Heart left ventricle (tissue), 16 donors: ENCODE measurements at regions of chr17 and their contacts with region 1.

Region 1: GRCh38 chr17:44070455-44071197 is at the start of gene G6PC3:
- DNase-seq: peak; percentile 96 to 98 (median 97)
- ATAC-seq: peak; percentile 92 to 96 (median 94)
- H3K4me3 ChIP-seq: peak within 1 kb of the TSS; percentile 32 to 85 (median 74)
- H3K27ac ChIP-seq: peak within 1 kb of the TSS; percentile 18 to 94 (median 90)
- H3K4me1 ChIP-seq: peaks cover 5 to 42% (median 27%) of the 10 kb centered on the region in 12 donors
- H3K27me3 ChIP-seq: no peaks in the 10 kb centered on the region
- CTCF ChIP-seq: peak in 2 of 12 donors; percentile 27 to 38
- POLR2A ChIP-seq: peak in 1 of 2 donors; percentile 67
- total RNA-seq, gene G6PC3: 28.5 to 46.5 (median 36.6) TPM

Region 2: GRCh38 chr17:44014437-44015172 is 56.0 kb before region 1 on chr17 and contains the start of gene TMEM101:
- intact Hi-C with region 1: loop called in 1 of 10 experiments (anchors 2 kb)
- DNase-seq: peak; percentile 91 to 94 (median 93)
- ATAC-seq: peak; percentile 93 to 96 (median 94)
- H3K4me3 ChIP-seq: peak within 1 kb of the TSS; percentile 68 to 97 (median 84)
- H3K27ac ChIP-seq: peak within 1 kb of the TSS in 11 of 12 donors; percentile 63 to 85 (median 79)
- H3K4me1 ChIP-seq: peaks cover 2 to 42% (median 15%) of the 10 kb centered on the region in 12 donors
- H3K27me3 ChIP-seq: no peaks in the 10 kb centered on the region
- CTCF ChIP-seq: peak in 1 of 12 donors; percentile 8
- POLR2A ChIP-seq: peak in 1 of 2 donors; percentile 49
- total RNA-seq, gene TMEM101: 13.4 to 22.1 (median 19.3) TPM

Region 3: GRCh38 chr17:44123356-44124117 is 52.9 kb after region 1 on chr17 and contains the start of gene HDAC5:
- intact Hi-C with region 1: loop called in 4 of 10 experiments (anchors 1 to 10 kb)
- DNase-seq: peak; percentile 97 to 98 (median 98)
- ATAC-seq: peak; percentile 98 to 99 (median 98)
- H3K4me3 ChIP-seq: peak within 1 kb of the TSS; percentile 86 to 100 (median 99)
- H3K27ac ChIP-seq: peak within 1 kb of the TSS; percentile 88 to 99 (median 94)
- H3K4me1 ChIP-seq: peaks cover 0 to 55% (median 39%) of the 10 kb centered on the region in 12 donors
- H3K27me3 ChIP-seq: no peaks in the 10 kb centered on the region
- CTCF ChIP-seq: peak; percentile 46 to 85 (median 64)
- POLR2A ChIP-seq: peak; percentile 79 to 90
- total RNA-seq, gene HDAC5: 54.6 to 283 (median 70.1) TPM

Region 4: DNA sequence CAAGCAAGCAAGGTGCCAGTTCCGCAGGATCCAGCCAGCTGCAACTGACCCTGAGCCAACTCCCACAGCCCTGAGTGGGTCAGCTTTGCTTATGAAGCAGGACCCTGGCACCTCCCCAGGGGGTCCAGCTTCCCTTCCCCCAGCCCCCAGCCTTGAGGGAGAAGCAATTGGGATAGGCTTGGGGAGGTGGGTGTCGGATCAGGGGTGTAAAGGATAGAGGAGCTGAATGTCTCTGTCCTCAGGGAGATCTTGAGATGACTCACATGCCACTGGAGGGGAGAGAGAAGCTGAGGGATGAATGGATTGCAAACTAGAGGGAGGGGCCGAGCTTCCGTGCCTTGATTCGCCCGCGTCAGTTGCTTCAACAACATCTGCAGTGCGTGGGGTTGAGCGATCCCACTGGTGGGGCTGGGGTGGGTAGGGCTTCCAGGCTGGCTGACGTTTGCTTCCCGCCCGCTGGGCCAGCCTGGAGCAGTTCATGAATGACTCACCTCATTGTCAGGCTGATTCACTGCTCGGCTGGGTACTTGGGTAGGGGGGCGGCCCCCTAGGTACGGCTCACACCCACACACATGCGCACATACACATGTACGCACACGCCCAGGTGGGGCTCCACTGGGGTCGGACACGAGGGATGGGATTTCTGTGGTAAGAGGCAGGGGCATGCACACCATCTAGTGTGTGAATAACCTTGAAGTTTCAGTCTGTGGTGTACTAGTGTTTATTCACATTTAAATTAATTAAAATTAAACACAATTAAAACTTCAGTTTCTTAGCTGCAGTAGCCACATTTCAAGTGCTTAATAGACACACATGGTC is 67.5 kb after region 1 on chr17:
- intact Hi-C with region 1: no loop called
- DNase-seq: peak; percentile 65 to 90 (median 80)
- ATAC-seq: peak; percentile 32 to 92 (median 90)
- H3K4me3 ChIP-seq: peak overlapping the region in 1 of 12 donors; percentile 0
- H3K27ac ChIP-seq: peak overlapping the region in 1 of 12 donors; percentile 35
- H3K4me1 ChIP-seq: peaks cover 0 to 24% (median 10%) of the 10 kb centered on the region in 12 donors
- H3K27me3 ChIP-seq: no peaks in the 10 kb centered on the region
- CTCF ChIP-seq: no peak
- POLR2A ChIP-seq: no peak

Region 5: DNA sequence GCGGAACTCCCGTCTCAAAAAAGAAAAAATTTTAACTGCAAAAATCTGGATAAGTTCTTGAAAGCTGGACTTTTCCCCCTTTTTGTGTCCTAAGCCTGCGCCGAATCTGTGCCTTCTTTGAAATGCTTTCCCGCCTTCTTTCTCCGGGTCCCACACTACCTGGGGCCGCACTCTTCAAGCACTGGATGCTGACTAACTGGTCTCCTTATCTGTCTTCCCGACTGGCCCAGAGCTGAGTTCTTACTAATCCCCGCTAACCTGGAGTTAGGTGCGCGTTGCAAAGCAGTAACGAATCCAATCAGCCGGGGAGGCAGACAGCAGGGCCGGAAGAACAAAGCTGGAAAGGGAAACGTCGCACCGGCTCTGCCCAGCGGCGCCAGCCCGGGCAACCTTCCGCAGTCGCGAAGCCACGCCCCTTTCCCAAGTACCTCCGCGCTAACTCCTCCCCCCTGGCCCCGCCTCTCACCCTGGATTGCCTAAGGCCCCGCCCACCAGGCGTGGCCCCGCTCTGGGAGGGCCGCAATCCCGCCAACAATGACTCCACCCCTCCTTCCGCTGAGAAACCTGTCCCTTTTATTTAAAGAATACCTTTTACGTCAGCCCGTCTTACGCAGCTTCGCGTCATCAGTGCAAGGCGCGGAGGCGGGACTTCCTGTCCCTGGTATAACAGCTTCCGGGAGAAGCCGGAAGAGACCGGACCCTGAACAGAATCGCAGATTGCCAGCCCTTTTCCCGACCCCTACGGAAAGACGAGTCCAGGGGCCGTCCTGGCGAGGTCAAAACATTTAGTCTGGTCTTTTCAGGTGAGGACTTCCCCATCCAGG is 115.9 kb after region 1 on chr17 and contains the start of gene TMUB2:
- intact Hi-C with region 1: loop called in 1 of 10 experiments (anchors 10 kb)
- DNase-seq: peak; percentile 99
- ATAC-seq: peak; percentile 95 to 98 (median 96)
- H3K4me3 ChIP-seq: peak within 1 kb of the TSS; percentile 72 to 99 (median 88)
- H3K27ac ChIP-seq: peak within 1 kb of the TSS; percentile 95 to 100 (median 98)
- H3K4me1 ChIP-seq: peaks cover 0 to 49% (median 22%) of the 10 kb centered on the region in 12 donors
- H3K27me3 ChIP-seq: no peaks in the 10 kb centered on the region
- CTCF ChIP-seq: no peak
- POLR2A ChIP-seq: peak in 1 of 2 donors; percentile 90
- total RNA-seq, gene TMUB2: 18.8 to 37.4 (median 21.8) TPM

Region 6: DNA sequence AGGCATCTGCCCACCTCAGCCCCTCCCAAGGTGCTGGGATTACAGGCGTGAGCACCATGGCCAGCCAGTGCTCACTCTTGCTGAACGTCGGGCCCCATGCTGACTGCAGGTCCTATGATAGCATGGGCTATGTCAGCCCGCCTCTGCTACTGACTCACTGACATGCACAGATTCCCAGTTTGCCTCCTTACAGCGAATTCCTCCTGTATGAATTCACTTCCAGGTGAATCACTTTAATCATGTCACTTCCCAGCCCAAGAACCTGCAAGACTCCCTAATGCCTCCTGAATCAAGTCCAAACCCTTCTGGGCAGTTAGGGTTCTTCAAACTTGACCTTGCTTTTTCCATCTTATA is 164.9 kb after region 1 on chr17:
- intact Hi-C with region 1: no loop called
- DNase-seq: no peak
- ATAC-seq: no peak
- H3K4me3 ChIP-seq: no peak overlapping the region
- H3K27ac ChIP-seq: peak overlapping the region in 1 of 12 donors; percentile 29
- H3K4me1 ChIP-seq: peaks cover 0 to 15% (median 0%) of the 10 kb centered on the region in 12 donors
- H3K27me3 ChIP-seq: no peaks in the 10 kb centered on the region
- CTCF ChIP-seq: no peak
- POLR2A ChIP-seq: no peak